Prostate gland (tissue), 2 donors: ENCODE measurements at regions of chr16 and their contacts with region 1.

Region 1: GRCh38 chr16:55944377-55944802 is 69.2 kb upstream of the CES5A start:
- DNase-seq: peak; percentile 25
- H3K4me3 ChIP-seq: no peak overlapping the region
- H3K27ac ChIP-seq: no peak overlapping the region
- H3K4me1 ChIP-seq: no peaks in the 10 kb centered on the region
- H3K27me3 ChIP-seq: no peaks in the 10 kb centered on the region
- CTCF ChIP-seq: peak; percentile 71 to 78 (median 77)
- POLR2A ChIP-seq: no peak

Region 2: DNA sequence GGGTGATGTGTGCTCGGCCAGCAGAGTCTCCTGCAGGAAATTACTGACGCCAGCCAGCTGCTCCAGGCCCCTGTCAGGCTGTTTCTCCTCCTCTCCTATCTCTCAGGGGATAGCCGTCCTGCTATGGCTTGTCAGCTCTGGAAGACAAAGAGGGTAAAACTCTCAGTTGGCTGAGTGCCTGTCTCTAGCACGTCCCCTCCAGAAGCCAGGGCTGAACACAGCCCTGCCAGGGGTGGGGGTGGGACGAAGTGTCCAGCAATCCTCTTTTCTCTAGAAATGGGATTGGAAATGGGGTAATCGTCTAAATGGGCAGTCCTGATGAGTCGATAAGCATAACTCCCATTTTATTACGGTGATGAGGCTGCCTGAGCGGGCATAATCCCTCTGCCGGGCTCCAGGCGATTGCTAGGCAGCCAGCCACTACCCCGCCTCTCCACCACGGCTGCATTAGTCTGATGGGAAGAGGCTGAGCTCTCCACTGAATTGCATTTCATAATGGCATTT is 157.8 kb after region 1 on chr16:
- intact Hi-C with region 1: loop called (anchors 5 kb)
- DNase-seq: no peak
- H3K4me3 ChIP-seq: no peak overlapping the region
- H3K27ac ChIP-seq: peak overlapping the region in 1 of 2 donors; percentile 53
- H3K4me1 ChIP-seq: no peaks in the 10 kb centered on the region
- H3K27me3 ChIP-seq: no peaks in the 10 kb centered on the region
- CTCF ChIP-seq: no peak
- POLR2A ChIP-seq: no peak

Region 3: DNA sequence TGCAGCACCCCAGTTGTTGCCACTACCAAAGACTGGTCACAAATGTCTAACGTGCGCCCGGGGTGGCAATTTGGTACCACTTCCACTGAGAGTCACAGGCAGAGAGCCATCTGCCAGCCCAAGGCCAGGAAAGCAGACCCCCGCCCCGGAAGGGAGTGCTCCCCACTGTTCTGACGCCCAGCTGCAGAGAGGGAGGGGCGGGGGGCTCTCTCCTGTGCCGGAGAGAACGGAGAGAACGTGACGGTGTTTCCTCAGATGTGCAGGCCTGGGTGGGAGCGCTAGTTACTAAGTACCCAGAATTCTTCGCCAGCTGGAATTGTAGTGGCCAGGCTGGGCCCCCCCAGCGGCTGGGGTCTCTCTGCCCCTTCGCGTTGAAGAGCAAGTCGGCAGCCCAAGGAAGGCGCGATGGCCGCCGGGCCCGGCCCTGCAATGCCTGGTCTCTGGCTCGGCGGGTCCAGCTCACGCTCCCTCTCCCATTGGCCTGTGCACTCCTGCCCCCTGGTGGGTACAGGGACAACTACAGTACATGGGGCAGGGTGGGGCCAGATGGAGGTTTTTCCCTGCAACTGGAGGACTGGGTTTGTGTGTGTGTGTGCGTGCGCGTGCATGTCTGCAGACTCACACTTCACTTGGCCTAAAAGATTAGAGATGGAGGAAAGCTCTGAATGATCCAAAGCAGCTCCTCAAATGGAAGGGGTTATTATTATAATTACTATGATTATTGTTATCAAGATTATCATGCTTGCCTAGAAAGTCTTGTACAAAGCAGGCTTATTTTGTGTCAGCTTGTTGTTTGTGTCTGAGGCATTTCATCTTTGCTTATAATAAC is 373.8 kb after region 1 on chr16:
- intact Hi-C with region 1: loop called (anchors 2 kb)
- DNase-seq: peak; percentile 75
- H3K4me3 ChIP-seq: peak overlapping the region in 1 of 2 donors; percentile 13
- H3K27ac ChIP-seq: no peak overlapping the region
- H3K4me1 ChIP-seq: no peaks in the 10 kb centered on the region
- H3K27me3 ChIP-seq: no peaks in the 10 kb centered on the region
- CTCF ChIP-seq: peak; percentile 94 to 96 (median 96)
- POLR2A ChIP-seq: no peak